ENCODE measurements at regions of chr16 and their contacts with region 1.

Region 1: DNA sequence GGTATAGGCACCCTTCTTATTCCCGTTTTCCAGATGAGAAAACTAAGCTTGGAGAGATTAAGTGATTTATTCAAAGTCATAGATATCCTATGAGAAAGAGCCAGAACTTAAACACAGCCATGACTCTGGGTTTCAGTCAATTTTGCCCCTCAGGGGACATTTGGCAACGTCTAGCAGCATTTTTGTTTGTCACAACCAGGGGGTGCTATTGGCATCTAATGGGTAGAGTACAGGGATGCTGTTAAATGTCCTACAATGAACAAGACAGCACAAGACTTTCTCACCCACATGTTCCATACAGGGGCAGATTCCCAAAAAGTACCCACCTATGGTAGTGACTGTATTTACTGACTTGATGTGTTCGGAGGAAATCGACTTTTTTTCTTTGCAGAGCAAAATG is 4.8 kb upstream of the SHISA9 start:
- DNase-seq: no peak
- H3K4me3 Mint-ChIP-seq: no peak overlapping the region
- H3K27ac Mint-ChIP-seq: no peak overlapping the region
- H3K4me1 Mint-ChIP-seq: no peaks in the 10 kb centered on the region
- H3K27me3 Mint-ChIP-seq: peaks cover 31% of the 10 kb centered on the region

Region 2: DNA sequence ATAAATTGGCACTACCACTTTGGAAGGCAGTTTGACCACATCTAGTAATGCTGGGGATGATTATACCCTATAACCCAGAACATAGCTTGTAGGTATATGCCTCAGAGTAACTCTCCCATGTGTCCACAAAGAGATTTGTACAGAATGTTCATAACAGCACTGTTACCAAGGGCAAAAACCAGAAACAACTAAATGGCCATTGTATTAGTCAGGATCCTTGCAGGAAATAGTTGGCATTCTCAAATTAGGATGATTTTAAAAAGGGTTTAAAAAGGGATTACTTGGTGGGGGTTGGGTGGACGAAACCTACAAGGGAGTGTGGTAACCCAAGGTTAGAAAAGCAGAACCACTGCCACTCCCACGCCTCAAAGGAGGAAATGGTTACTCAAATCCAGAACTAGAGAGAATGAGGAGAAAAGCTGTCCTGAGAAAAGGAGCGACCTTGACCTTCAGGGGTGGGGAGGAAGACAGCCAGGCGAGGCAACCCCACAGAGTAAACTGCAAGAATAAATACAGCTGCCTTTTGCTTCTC is 95.0 kb before region 1 on chr16:
- CTCF ChIA-PET with region 1: no interaction called
- POLR2A ChIA-PET with region 1: no interaction called
- intact Hi-C with region 1: no loop called
- DNase-seq: peak; percentile 48
- H3K4me3 Mint-ChIP-seq: peak overlapping the region; percentile 95
- H3K27ac Mint-ChIP-seq: peak overlapping the region; percentile 56
- H3K4me1 Mint-ChIP-seq: peaks cover 30% of the 10 kb centered on the region
- H3K27me3 Mint-ChIP-seq: no peaks in the 10 kb centered on the region

Region 3: DNA sequence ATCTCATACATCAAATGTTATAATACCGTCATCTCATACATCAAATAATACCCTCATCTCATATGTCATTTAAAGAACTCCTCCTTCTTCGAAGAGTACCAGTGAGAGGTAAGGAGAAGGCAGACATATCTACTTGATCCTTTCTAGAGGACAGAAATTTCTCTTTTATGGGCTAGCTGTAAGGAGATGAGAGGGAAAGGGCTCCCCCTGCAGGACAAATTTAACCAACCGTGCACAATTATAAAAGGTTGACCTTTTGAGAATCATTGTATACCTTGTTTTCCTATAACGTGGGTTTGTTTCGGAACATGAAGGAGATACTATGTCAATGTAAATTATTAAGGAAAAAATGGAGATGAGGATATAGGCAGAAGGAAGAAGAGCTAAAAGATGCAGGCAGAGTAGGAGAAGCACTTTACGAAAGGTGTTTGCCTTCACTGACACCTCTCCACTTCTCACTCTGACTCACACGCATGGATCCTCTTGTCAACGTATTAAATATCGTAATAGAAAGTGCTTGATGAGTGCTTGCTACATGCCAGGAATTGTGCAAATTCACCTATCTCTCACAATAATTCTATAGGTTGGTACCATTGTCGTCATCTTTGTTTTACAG is 557.5 kb after region 1 on chr16:
- CTCF ChIA-PET with region 1: no interaction called
- POLR2A ChIA-PET with region 1: no interaction called
- intact Hi-C with region 1: loop called (anchors 5 kb)
- DNase-seq: peak; percentile 12
- H3K4me3 Mint-ChIP-seq: no peak overlapping the region
- H3K27ac Mint-ChIP-seq: no peak overlapping the region
- H3K4me1 Mint-ChIP-seq: no peaks in the 10 kb centered on the region
- H3K27me3 Mint-ChIP-seq: no peaks in the 10 kb centered on the region

Measured in activated CD4-positive, alpha-beta memory T cell treated with anti-CD3 and anti-CD28 coated beads for 36 hours (primary cell).